ENCODE measurements at regions of chr17 and their contacts with region 1.

Region 1: DNA sequence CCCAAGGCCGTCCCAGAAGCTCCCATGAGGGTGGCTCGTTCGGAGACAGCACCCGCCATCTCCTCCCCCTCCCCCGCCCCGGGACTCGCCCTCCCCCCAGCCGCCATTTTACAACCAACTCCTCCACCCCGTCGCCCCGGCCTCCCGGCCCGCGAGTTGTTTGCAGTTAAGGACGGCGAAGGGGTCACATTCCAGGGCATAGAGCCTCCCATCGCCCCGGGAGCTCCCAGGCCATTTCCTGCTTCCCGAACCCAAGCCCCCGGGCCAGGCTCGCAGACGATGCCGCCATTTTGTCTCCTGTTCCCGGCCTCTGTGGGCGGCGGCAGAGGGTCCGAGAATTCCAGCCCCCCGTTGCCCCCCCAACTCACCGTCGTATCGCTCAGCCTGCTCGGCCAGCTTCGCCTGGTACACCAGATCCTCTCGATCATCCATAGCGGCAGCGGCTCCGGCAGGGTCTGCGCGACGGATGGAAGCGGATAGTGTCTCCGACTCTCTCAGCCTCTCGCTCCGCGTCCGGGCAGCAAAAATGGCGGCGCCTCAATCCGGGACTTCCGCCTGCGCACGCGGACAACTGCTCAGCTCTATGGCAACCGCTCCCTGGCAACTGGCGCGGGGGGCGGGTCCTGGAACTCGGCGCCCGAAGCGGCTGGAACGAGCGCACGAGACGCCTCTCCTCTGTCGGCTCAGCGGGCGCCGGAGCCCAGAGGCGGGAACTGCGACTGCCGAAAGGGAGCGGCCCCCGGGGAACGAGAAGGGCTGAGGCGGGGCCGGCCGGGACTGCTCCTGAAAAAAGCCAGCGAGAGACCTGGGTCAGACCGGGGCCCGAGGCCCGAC is at the start of gene YWHAE:
- DNase-seq: peak; percentile 99
- H3K4me3 Mint-ChIP-seq: peak within 1 kb of the TSS; percentile 100
- H3K27ac Mint-ChIP-seq: peak within 1 kb of the TSS; percentile 100
- H3K4me1 Mint-ChIP-seq: peaks cover 21% of the 10 kb centered on the region
- H3K27me3 Mint-ChIP-seq: peaks cover 3% of the 10 kb centered on the region
- total RNA-seq, gene YWHAE: 493 and 504 TPM in 2 replicates

Region 2: GRCh38 chr17:1365445-1366039 is 34.4 kb before region 1 on chr17:
- intact Hi-C with region 1: loop called (anchors 2 kb)
- DNase-seq: peak; percentile 88
- H3K4me3 Mint-ChIP-seq: no peak overlapping the region
- H3K27ac Mint-ChIP-seq: no peak overlapping the region
- H3K4me1 Mint-ChIP-seq: peaks cover 40% of the 10 kb centered on the region
- H3K27me3 Mint-ChIP-seq: no peaks in the 10 kb centered on the region

Region 3: DNA sequence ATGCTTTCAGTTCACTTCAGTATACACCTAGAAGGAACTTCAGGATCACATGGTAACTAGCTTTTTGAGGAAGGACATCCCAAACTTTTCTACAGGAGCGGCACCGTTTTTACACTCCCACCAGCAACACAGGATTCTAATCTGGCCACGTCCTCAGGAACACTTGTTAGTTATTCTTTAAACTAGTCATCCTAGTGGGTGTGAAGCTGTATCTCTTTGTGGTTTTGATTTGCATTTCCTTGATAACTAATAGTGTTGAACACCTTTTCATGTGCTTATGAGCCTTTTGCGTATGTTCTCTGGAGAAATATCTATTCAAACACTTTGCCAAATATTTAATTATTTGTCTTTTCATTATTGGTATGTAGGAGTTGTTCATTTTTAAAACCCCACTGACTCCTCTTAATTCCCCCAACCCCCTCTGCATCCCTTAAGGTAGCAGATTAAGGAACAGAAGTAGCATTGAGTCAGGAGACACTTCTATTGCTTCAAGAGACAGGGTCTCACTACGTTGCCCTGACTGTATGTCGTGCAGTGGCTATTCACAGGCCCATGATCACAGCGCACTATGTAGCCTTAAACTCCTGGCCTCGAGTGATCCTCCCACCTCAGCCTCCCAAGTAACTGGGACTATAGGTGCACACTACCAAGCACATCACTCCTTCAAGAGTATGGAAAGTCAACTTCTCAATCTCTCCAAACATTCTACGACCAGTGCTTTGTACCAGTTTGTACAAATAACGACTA is 25.3 kb before region 1 on chr17:
- intact Hi-C with region 1: loop called (anchors 2 kb)
- DNase-seq: no peak
- H3K4me3 Mint-ChIP-seq: peak overlapping the region; percentile 56
- H3K27ac Mint-ChIP-seq: peak overlapping the region; percentile 77
- H3K4me1 Mint-ChIP-seq: peaks cover 56% of the 10 kb centered on the region
- H3K27me3 Mint-ChIP-seq: no peaks in the 10 kb centered on the region

Region 4: GRCh38 chr17:1413281-1413791 is 13.4 kb after region 1 on chr17:
- intact Hi-C with region 1: no loop called
- DNase-seq: no peak
- H3K4me3 Mint-ChIP-seq: no peak overlapping the region
- H3K27ac Mint-ChIP-seq: no peak overlapping the region
- H3K4me1 Mint-ChIP-seq: no peaks in the 10 kb centered on the region
- H3K27me3 Mint-ChIP-seq: no peaks in the 10 kb centered on the region

Region 5: DNA sequence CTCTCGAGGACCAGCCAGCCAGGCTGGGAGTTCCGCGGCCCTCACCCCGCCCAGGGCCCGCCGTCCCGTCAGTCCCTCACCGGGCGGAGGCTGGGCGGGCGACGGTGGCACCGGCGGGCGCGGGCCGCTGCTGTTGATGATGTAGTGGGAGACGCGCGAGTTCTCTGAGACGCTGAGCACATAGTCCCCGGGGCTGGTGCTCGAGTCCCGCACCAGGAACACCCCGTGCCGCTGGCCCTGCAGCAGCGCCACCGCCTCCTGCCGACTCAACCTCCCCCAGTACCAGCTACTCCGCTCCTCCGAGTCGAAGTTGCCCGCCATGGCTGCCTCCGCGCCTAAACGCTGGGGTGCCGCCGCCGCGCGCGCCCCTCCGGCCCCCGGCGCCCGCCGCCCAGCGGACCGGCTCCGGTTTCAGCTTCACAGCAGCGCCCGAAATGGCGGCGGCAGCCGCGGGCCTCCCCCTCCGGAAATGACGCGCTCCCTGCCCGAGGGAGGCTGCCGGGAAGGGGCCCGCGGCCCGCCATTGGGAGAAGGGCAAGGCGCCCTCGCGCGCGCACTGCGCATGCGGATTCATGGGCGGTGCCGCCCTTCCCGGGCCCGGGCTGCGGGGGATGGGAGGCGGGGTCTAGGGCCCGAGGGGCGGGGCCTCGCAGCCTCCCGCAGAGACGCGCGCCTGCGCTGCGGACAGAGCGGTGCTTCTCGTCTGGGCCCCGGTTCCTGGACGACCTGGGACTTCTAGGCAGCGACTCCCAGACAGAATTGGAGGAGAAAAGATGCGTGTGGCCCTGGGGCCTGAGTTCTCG is 56.1 kb after region 1 on chr17 and contains the start of gene CRK:
- intact Hi-C with region 1: loop called (anchors 1 kb)
- DNase-seq: peak; percentile 100
- H3K4me3 Mint-ChIP-seq: peak within 1 kb of the TSS; percentile 91
- H3K27ac Mint-ChIP-seq: peak within 1 kb of the TSS; percentile 91
- H3K4me1 Mint-ChIP-seq: peaks cover 24% of the 10 kb centered on the region
- H3K27me3 Mint-ChIP-seq: peaks cover 14% of the 10 kb centered on the region
- total RNA-seq, gene CRK: 22.5 and 24.3 TPM in 2 replicates

Measured in activated CD4-positive, alpha-beta T cell treated with anti-CD3 and anti-CD28 coated beads, Interleukin-2, amount 10 ng/mL, durations not matched to agents 24 days and 14 days (primary cell).